Activated CD8-positive, alpha-beta memory T cell treated with anti-CD3 and anti-CD28 coated beads, Interleukin-2, amount 10 ng/mL, durations not matched to agents 7 days and 5 days (primary cell): ENCODE measurements at regions of chr5 and their contacts with region 1.

Region 1: DNA sequence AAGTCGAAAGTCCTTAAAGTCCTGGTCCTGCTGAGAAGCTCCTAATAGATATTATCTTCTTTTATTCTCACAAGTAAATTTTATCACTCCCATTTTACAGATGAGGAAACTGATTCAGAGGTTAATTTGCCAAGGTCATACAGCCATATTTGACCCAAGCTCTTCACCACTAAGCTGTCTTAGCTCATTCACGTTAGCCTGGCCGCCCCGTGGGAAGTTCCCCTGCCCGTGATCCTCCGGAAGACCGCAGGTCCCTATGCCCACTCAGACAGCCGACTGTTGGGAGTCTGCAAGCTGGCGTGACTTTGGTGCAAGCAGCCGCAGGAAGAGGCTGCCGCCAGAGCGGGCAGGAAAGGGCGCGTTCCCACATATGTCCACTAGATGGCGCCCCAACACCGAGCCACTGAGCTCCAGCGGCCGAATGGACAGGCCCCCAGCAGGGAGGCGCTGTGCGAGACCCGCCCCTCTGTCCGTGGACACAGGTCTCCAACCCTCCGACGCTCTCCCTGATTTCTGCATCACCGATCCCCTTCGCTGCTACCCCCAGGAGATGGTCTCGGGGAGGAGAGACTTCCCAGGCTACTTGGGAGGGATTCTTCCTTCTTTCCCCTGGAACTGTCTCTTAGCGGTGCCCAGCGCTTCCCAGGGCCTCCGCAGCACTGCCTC is 10.0 kb upstream of the ARAP3 start:
- DNase-seq: peak; percentile 92
- ATAC-seq: peak; percentile 85
- H3K4me3 Mint-ChIP-seq: peak overlapping the region; percentile 76
- H3K27ac Mint-ChIP-seq: peak overlapping the region; percentile 86
- H3K4me1 Mint-ChIP-seq: peaks cover 35% of the 10 kb centered on the region
- H3K27me3 Mint-ChIP-seq: peaks cover 28% of the 10 kb centered on the region

Region 2: GRCh38 chr5:141650851-141651727 is 40.9 kb before region 1 on chr5 and contains the start of gene FCHSD1:
- CTCF ChIA-PET with region 1: interaction called, 18 read pairs
- DNase-seq: peak; percentile 92
- ATAC-seq: peak; percentile 98
- H3K4me3 Mint-ChIP-seq: peak within 1 kb of the TSS; percentile 93
- H3K27ac Mint-ChIP-seq: peak within 1 kb of the TSS; percentile 95
- H3K4me1 Mint-ChIP-seq: peaks cover 27% of the 10 kb centered on the region
- H3K27me3 Mint-ChIP-seq: no peaks in the 10 kb centered on the region
- total RNA-seq, gene FCHSD1: 46.5 to 64.1 TPM

Region 3: GRCh38 chr5:141681695-141682641 is 10.0 kb before region 1 on chr5 and contains the start of gene ARAP3:
- CTCF ChIA-PET with region 1: interaction called, 79 read pairs
- DNase-seq: peak; percentile 62
- ATAC-seq: peak; percentile 88
- H3K4me3 Mint-ChIP-seq: peak within 1 kb of the TSS; percentile 75
- H3K27ac Mint-ChIP-seq: peak within 1 kb of the TSS; percentile 73
- H3K4me1 Mint-ChIP-seq: peaks cover 30% of the 10 kb centered on the region
- H3K27me3 Mint-ChIP-seq: no peaks in the 10 kb centered on the region
- total RNA-seq, gene ARAP3: 9.9 to 11.0 TPM

Region 4: DNA sequence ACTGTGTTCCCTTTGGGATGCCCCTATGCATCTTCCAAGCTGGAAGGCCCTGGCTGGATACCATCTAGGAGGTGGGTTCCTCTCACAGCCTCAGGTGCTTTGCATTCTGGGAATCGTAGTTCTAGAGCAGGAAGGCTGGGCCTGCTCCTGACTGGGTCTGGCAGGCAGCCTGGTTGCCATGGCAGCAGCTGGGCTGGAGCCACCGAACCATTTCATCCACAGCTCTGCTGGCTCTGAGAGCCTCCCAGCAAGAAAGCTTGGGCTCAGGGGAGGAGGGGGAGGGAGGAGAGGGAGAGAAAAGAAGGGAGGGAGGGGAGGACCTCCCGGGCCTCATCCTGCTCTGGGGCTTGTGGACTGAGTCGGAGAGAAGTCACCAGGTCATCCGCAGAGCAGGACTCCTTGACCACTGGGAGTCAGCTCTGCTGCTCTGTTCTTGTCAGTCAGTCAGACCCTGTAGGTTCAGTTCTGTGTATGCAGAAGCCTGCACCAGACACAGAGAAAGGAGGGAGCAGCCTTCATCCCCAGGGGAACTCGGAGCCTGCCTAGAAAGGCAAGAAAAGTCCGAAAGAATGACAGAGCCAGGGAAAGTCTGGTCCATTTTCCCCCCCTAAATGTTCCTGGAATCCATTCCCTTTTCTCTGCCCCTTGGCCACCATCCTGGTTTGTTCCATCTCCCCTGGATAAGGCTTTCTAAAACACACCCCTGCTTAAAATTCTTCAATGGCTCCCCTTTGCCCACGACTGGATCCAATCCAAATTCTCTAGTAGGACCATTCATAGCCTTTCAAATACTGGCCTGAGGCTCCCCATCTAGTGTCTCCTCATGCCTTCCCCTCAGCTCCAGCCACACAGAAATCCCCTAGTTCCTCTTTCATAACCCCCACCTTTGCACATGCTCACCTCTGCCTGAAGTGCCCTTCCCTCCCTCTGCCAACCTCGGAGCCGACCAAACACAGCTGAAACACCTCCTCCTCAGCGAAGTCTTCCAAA is 55.4 kb after region 1 on chr5:
- CTCF ChIA-PET with region 1: no interaction called
- DNase-seq: no peak
- ATAC-seq: no peak
- H3K4me3 Mint-ChIP-seq: no peak overlapping the region
- H3K27ac Mint-ChIP-seq: no peak overlapping the region
- H3K4me1 Mint-ChIP-seq: no peaks in the 10 kb centered on the region
- H3K27me3 Mint-ChIP-seq: peaks cover 42% of the 10 kb centered on the region

Region 5: GRCh38 chr5:141832131-141832918 is 140.3 kb after region 1 on chr5:
- CTCF ChIA-PET with region 1: interaction called, 38 read pairs
- DNase-seq: no peak
- ATAC-seq: no peak
- H3K4me3 Mint-ChIP-seq: no peak overlapping the region
- H3K27ac Mint-ChIP-seq: no peak overlapping the region
- H3K4me1 Mint-ChIP-seq: peaks cover 5% of the 10 kb centered on the region
- H3K27me3 Mint-ChIP-seq: peaks cover 30% of the 10 kb centered on the region

Region 6: DNA sequence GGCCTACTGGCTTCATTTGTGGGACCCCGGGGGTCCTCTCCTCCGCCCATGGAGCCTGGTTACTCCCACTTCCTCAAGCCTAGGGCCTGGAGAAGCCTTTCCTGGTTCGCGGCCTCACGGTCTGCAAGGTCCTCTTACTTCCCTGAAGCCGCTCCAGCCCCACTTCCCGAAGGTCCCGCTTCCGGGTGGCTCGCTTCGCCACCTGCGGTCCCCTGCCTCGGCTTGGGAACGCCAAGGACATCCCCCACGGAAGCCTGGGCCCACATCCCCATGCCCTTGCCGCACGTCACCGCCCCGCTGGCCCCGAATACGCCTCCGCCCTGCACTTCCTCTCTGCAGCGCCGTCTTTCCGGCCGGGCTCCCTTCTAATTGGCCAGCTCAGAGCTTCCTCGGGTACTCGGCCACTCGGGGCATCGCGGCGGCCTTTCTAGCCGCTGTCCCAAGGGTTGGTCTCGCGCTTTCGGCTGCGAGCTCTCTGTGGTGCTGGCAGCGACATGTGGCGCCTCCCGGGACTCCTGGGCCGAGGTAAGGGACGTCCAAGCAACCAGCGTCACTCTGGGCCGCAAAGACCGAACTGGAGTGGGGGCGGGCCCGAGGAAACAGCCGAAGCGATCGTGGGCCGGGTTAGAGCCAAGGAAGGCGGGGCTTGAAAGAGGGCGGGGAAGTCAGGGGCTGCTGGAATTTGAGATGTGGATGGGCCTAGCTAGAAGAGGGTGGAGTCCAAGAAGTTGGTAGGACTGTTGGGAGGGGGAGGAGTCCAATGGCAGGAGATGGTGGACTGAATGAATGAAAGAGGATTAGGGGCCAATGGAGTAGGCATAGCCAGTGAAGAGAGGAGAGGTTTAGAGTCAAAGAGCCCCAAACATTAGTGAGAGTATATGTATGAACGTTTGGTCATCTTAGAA is 231.7 kb after region 1 on chr5 and contains the start of gene DELE1:
- CTCF ChIA-PET with region 1: interaction called, 28 read pairs
- DNase-seq: peak; percentile 96
- ATAC-seq: peak; percentile 98
- H3K4me3 Mint-ChIP-seq: peak within 1 kb of the TSS; percentile 85
- H3K27ac Mint-ChIP-seq: peak within 1 kb of the TSS; percentile 91
- H3K4me1 Mint-ChIP-seq: peaks cover 26% of the 10 kb centered on the region
- H3K27me3 Mint-ChIP-seq: no peaks in the 10 kb centered on the region
- total RNA-seq, gene DELE1: 65.4 to 68.7 TPM

Region 7: DNA sequence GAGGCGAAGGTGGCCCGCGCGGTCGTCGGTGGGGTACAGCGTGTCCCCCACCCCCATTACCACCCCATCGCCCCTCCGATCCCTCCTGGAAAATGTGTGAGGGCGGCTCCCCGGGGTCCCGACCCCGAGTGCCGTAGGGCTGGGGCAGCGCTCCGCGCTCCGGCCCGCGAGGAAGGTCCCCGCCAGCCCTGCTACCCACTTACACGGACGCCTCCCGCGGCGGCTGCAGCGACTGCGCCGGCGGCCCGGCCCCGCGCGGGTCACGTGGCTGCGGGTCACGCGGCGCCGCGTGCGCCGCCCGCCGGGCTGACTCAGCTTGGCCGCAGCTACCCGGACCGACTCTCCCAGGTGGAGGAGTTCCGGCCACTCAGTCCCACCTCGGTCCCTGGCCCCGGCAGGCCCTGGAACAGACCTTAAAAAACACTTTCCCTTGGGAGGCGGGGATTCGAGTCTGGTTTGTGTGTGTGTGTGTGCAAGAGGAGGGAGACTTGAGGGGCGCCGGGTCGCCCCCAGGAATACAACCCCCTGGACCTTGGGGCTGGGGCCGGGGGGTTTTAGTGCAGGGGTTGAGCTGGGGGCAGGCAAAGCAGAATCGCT is 320.9 kb after region 1 on chr5 and contains the start of gene GNPDA1:
- CTCF ChIA-PET with region 1: interaction called, 10 read pairs
- DNase-seq: peak; percentile 74
- ATAC-seq: peak; percentile 59
- H3K4me3 Mint-ChIP-seq: peak within 1 kb of the TSS; percentile 74
- H3K27ac Mint-ChIP-seq: peak within 1 kb of the TSS; percentile 81
- H3K4me1 Mint-ChIP-seq: peaks cover 57% of the 10 kb centered on the region
- H3K27me3 Mint-ChIP-seq: peaks cover 14% of the 10 kb centered on the region
- total RNA-seq, gene GNPDA1: 7.7 to 10.0 TPM